ENCODE measurements at regions of chr15 and their contacts with region 1.

Region 1: DNA sequence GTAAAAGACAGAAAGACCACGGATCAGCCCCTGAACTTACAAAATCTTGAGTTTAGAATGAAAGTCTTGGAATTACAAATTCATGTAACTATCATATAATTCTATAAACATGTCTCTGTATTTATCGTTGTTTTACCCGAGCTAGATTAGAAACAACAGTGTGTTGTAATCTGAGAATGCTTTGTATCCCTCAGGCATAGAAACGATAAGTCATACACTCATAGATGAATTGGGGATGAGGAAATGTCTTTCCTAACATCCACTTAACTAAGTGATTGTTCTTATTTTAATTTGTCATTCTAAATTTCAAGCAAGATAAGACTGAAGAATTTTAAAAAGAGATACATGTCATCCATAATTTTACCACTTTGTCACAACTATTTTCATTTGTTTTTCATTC is 165.3 kb downstream of the RYR3 start:
- DNase-seq: no peak
- ATAC-seq: no peak
- H3K4me3 ChIP-seq: no peak overlapping the region
- H3K27ac ChIP-seq: peak overlapping the region in 3 of 4 donors; percentile 2 to 54 (median 49)
- H3K4me1 ChIP-seq: peaks cover 11 to 13% of the 10 kb centered on the region in 2 donors
- H3K27me3 ChIP-seq: no peaks in the 10 kb centered on the region
- CTCF ChIP-seq: no peak
- POLR2A ChIP-seq: no peak

Region 2: DNA sequence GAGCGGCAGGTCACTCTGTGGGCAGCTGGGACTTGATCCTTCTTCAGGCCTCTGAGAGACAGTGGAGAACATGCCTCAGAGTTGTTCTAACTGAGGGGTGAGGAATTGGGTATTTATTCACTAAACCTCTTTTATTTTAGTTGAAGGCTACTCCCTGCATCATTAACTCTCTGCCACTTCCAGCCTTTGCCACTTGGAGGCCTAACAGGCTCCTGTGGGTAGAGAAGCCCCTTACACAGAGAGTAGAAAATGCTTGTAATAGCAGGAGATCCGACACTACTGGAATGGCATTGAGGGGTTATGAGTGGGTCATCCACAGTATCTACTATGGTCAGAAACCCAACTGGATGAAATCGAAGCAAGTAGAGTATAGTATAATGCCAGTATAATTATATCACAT is 83.6 kb before region 1 on chr15:
- in situ Hi-C with region 1: loop called in 1 of 4 experiments (anchors 10 kb)
- intact Hi-C with region 1: no loop called
- DNase-seq: no peak
- ATAC-seq: no peak
- H3K4me3 ChIP-seq: no peak overlapping the region
- H3K27ac ChIP-seq: no peak overlapping the region
- H3K4me1 ChIP-seq: peaks cover 34 to 60% of the 10 kb centered on the region in 2 donors
- H3K27me3 ChIP-seq: no peaks in the 10 kb centered on the region
- CTCF ChIP-seq: no peak
- POLR2A ChIP-seq: no peak